H1 (cell line): ENCODE measurements at regions of chr12 and their contacts with region 1.

Region 1: GRCh38 chr12:25970916-25971653 is 12.6 kb downstream of the RASSF8 start:
- DNase-seq: no peak
- H3K4me3 ChIP-seq: no peak overlapping the region
- H3K27ac ChIP-seq: no peak overlapping the region
- H3K4me1 ChIP-seq: peaks cover 0 to 5% (median 3%) of the 10 kb centered on the region in 4 experiments; a peak in 4 of 7 replicates
- H3K27me3 ChIP-seq: no peaks in the 10 kb centered on the region
- CTCF ChIP-seq: peak in 1 of 3 experiments; percentile 8; a peak in 1 of 4 replicates
- EP300 ChIP-seq: no peak
- POLR2A ChIP-seq: no peak
- RAD21 ChIP-seq: no peak

Region 2: GRCh38 chr12:25985296-25986175 is 14.5 kb after region 1 on chr12:
- CTCF ChIA-PET with region 1: interaction called, 33 read pairs
- POLR2A ChIA-PET with region 1: interaction called, 3 read pairs
- DNase-seq: no peak
- H3K4me3 ChIP-seq: no peak overlapping the region
- H3K27ac ChIP-seq: no peak overlapping the region
- H3K4me1 ChIP-seq: peaks cover 0 to 16% (median 8%) of the 10 kb centered on the region in 4 experiments; a peak in 3 of 7 replicates
- H3K27me3 ChIP-seq: no peaks in the 10 kb centered on the region
- CTCF ChIP-seq: no peak
- EP300 ChIP-seq: no peak
- POLR2A ChIP-seq: no peak
- RAD21 ChIP-seq: no peak

Region 3: DNA sequence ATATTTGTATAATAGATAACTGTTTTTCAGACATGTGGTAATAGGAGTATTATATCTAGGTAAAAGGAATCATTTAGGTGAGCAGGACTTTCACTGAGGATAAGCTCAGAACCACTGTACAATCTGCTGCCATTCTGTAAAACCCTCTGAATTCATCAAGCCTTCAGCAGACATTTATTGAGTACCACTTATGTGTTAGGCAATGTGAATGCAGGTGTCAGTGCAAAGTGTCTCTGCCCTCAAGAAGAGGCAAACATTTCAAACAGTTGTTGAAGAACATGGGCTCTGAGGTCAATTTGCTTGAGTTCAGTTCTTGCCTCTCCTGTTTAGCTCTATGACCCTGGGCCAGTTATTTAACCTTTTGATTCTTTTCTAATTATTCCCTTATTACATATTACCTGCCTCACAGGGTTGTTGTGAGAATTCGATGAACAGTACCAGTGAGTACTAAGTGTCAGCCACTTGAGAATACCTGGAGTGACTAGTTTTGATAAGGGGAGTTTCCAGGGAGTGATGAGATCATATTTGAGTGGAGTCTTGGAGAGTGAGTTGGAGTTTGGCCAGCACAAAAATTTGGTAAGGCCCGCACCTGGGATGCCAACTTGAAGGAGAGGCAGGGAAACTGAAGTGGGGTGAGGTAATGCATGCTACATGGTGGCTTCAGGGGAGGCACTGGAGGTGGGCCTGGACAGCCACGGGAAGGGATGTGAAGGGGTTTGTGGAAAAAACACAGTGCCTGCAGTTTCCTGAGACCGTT is 21.1 kb after region 1 on chr12:
- CTCF ChIA-PET with region 1: interaction called, 33 read pairs
- POLR2A ChIA-PET with region 1: no interaction called
- DNase-seq: no peak
- H3K4me3 ChIP-seq: no peak overlapping the region
- H3K27ac ChIP-seq: 0 out of 2 replicates have a peak overlapping the region, but pooled peaks have one; percentile 8
- H3K4me1 ChIP-seq: peaks cover 2 to 31% (median 15%) of the 10 kb centered on the region in 4 experiments; a peak in 6 of 7 replicates
- H3K27me3 ChIP-seq: no peaks in the 10 kb centered on the region
- CTCF ChIP-seq: no peak
- EP300 ChIP-seq: no peak
- POLR2A ChIP-seq: no peak
- RAD21 ChIP-seq: no peak